ENCODE measurements at regions of chr5 and their contacts with region 1.

Region 1: DNA sequence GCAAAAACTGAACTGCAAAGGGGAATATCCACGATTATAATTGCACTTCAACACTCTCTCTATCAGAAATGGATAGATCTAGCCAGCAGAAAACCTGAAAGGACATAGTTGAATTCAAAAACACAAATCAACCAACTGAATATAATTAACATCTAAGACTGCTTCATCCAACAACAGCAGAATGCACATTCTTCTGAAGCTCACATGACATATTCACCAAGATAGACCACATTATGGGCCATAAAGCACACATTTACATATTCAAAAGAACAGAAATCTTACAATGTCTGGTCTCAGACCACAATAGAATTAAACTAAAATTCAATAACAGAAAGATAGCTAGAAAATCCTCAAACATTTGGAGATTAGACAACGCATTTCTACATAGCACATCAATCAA is 118.3 kb downstream of the FBXO4 start:
- DNase-seq: no peak
- H3K4me3 ChIP-seq: no peak overlapping the region
- H3K27ac ChIP-seq: no peak overlapping the region
- H3K4me1 ChIP-seq: no peaks in the 10 kb centered on the region
- H3K27me3 ChIP-seq: no peaks in the 10 kb centered on the region
- CTCF ChIP-seq: no peak
- EP300 ChIP-seq: no peak
- RAD21 ChIP-seq: no peak

Region 2: DNA sequence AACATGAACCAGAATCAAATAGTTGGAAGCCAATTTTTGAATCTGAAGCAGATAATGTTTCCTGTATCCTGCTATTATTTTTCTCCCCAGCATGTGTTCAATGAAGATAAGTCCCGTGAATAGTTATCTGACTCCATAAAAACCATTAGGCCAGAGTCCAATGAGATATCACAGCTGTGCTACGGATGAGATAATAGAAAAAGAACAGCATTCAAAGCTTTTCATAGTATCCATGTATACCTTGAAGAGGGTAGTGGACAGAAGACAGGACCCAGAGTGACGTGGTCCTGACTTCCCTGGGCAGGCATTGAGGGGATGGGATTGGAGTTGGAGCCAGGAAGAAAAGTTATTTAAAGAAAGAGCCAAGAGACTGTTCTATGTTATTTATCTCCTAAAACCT is 779.4 kb before region 1 on chr5:
- CTCF ChIA-PET with region 1: no interaction called
- POLR2A ChIA-PET with region 1: no interaction called
- DNase-seq: peak; percentile 49
- H3K4me3 ChIP-seq: no peak overlapping the region
- H3K27ac ChIP-seq: peak overlapping the region; percentile 30 to 100; a peak in 3 of 4 replicates
- H3K4me1 ChIP-seq: peaks cover 7 to 20% of the 10 kb centered on the region in 2 experiments; a peak in 3 of 4 replicates
- H3K27me3 ChIP-seq: no peaks in the 10 kb centered on the region; the same call in 1 of the 2 replicates
- CTCF ChIP-seq: no peak
- EP300 ChIP-seq: peak; percentile 29 to 100; a peak in 3 of 4 replicates
- RAD21 ChIP-seq: peak; percentile 46

Region 3: GRCh38 chr5:41951224-41951623 is 92.2 kb before region 1 on chr5:
- CTCF ChIA-PET with region 1: no interaction called
- POLR2A ChIA-PET with region 1: no interaction called
- DNase-seq: no peak
- H3K4me3 ChIP-seq: no peak overlapping the region
- H3K27ac ChIP-seq: no peak overlapping the region
- H3K4me1 ChIP-seq: no peaks in the 10 kb centered on the region
- H3K27me3 ChIP-seq: no peaks in the 10 kb centered on the region
- CTCF ChIP-seq: no peak
- EP300 ChIP-seq: no peak
- RAD21 ChIP-seq: no peak

Region 4: DNA sequence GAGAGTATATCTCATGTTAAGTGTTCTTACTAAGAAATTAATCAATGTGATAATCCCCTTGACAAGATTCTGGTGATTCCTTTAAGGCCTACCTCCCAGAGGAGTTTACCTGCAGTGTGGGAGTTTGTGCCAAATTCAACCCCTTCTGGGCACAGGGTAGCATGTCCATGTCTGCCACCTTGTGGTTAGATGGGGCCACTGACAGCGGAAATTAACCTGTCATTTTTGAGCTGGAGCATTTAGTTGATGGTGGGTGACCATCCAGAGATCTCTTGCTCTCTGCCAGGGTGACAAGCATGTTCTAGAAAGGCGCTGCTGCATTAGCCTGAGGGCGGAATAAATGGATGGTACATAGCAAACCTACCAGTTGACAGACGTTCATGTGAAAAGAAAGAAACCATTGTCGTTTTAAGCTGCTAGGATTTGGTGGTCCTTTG is 13.9 kb after region 1 on chr5:
- CTCF ChIA-PET with region 1: interaction called, 12 read pairs
- POLR2A ChIA-PET with region 1: no interaction called
- DNase-seq: peak; percentile 46
- H3K4me3 ChIP-seq: peak overlapping the region in 1 of 2 experiments; percentile 10; a peak in 1 of 4 replicates
- H3K27ac ChIP-seq: no peak overlapping the region
- H3K4me1 ChIP-seq: no peaks in the 10 kb centered on the region; a peak in 1 of 4 replicates
- H3K27me3 ChIP-seq: no peaks in the 10 kb centered on the region; the same call in 1 of the 2 replicates
- CTCF ChIP-seq: peak; percentile 72
- EP300 ChIP-seq: no peak
- RAD21 ChIP-seq: peak; percentile 70